GM18951 (cell line): ENCODE measurements at regions of chr9 and their contacts with region 1.

Region 1: GRCh38 chr9:122107291-122107805 is 14.2 kb upstream of the TTLL11 start:
- POLR2A ChIP-seq: no peak

Region 2: GRCh38 chr9:122350638-122351355 is 243.4 kb after region 1 on chr9:
- in situ Hi-C with region 1: loop called (anchors 10 kb)
- POLR2A ChIP-seq: no peak

Region 3: DNA sequence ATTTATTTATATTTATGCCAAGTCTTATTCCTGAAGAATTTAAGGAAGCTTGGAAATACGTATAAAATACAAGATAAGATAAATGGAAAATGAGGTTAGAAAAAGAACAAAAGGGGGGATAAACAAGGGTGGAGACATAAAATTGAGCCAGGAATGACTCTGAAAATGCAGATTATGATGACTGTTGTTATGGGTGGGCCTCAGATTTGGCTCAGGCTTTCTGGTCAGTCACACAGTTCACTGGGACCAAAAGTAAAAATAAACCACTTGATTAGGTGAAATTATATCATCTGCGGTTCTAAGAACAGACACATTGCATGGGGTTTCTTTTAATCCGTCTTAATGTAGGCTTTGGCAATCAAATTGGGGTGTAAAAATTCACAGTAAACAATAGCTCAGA is 319.4 kb after region 1 on chr9:
- in situ Hi-C with region 1: no loop called
- POLR2A ChIP-seq: no peak